Aorta (tissue), 5 donors: ENCODE measurements at regions of chr10 and their contacts with region 1.

Region 1: DNA sequence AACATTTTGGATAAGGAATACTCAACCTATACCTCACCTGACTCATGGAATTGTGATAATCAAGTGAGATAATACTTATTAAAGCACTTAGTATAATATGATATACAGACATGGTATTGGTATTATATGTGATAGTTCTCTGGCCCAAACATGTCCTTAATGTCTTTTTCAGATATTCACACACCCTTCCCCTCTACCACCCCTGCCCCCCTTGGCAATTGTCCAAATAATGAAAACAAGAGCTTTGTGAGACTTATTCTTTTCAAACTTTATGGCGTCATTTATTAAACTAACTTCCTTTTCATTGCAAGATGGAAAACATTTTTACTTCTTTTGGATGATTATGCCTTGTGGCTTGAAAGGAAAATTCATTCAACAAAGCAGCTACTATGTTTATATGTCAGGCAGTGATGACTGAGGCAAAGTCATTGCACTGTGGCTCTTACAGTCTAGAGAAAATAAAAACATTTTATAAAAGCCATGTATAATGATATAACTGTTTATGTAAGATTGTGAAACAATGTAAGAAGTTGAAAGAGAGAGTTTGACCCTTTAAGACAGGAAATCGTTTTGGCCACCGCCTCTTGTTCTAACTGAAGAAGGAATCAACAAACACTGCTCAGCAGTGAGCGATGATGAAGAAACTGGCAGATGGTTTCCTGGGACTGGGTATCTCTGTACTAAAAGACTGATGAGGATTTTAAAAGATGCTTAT is 27.4 kb downstream of the MINPP1 start:
- DNase-seq: no peak
- ATAC-seq: peak; percentile 65
- H3K4me3 ChIP-seq: no peak overlapping the region
- H3K27ac ChIP-seq: peak overlapping the region in 1 of 2 donors; percentile 28
- H3K4me1 ChIP-seq: peaks cover 0 to 2% of the 10 kb centered on the region in 2 donors
- H3K27me3 ChIP-seq: no peaks in the 10 kb centered on the region

Region 2: GRCh38 chr10:87659571-87660483 is 127.8 kb after region 1 on chr10 and contains the start of gene PAPSS2:
- intact Hi-C with region 1: loop called (anchors 5 to 10 kb)
- DNase-seq: peak; percentile 87 to 89
- ATAC-seq: peak; percentile 78
- H3K4me3 ChIP-seq: peak within 1 kb of the TSS; percentile 40 to 76
- H3K27ac ChIP-seq: no peak within 1 kb of the TSS
- H3K4me1 ChIP-seq: no peaks in the 10 kb centered on the region
- H3K27me3 ChIP-seq: no peaks in the 10 kb centered on the region
- total RNA-seq, gene PAPSS2: 42.9 to 57.2 TPM

Region 3: GRCh38 chr10:87715552-87716347 is 183.7 kb after region 1 on chr10:
- intact Hi-C with region 1: no loop called
- DNase-seq: no peak
- ATAC-seq: no peak
- H3K4me3 ChIP-seq: no peak overlapping the region
- H3K27ac ChIP-seq: no peak overlapping the region
- H3K4me1 ChIP-seq: no peaks in the 10 kb centered on the region
- H3K27me3 ChIP-seq: no peaks in the 10 kb centered on the region

Region 4: DNA sequence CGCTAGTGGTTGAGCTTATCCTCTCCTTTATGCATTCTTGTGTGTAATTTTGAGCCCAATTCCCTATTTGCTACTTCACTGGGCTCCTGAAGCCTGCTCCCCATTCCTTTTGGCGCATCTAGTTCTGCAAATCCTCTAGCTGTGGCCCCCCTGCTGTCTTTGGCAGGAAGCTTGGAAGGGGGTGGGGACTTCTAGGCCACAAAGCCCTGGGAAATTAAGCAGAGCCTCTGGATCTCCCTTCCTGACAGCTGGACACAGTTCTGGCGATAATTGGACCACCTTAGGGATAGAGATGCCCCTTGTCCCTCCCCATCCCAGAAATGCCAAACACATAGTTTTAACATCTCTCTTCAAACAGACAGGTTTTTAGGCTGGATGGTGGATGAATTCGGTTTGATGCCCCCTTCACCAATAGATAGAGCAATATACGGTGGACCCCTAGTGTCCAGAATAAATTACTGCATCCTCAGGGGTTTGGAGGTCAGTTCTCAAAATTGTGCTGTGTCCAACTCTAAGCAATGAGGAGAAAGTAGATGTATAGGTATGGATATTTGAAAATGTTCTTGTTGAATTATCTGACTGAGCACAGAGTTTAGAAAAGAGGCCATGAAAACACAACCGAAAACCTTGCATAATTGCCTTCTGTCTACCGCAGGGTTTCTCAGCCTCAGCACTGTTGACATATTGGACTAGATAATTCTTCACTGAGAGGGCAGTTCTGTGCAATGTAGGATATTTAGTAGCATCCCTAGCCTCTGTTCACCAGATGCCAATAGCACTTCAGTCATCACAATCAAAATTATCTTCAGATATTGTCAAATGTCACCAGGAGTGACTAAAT is 203.1 kb after region 1 on chr10:
- intact Hi-C with region 1: loop called (anchors 2 kb)
- DNase-seq: no peak
- ATAC-seq: peak; percentile 85
- H3K4me3 ChIP-seq: no peak overlapping the region
- H3K27ac ChIP-seq: no peak overlapping the region
- H3K4me1 ChIP-seq: no peaks in the 10 kb centered on the region
- H3K27me3 ChIP-seq: no peaks in the 10 kb centered on the region